ENCODE measurements at regions of chr1 and their contacts with region 1.

Region 1: GRCh38 chr1:203267347-203267846 is 37.9 kb upstream of the BTG2 start:
- DNase-seq: peak; percentile 49 to 89 (median 84)
- ATAC-seq: peak; percentile 80
- H3K4me3 ChIP-seq: peak overlapping the region; percentile 82
- H3K4me3 Mint-ChIP-seq: peak overlapping the region; percentile 76 to 94 (median 90)
- H3K27ac ChIP-seq: peak overlapping the region; percentile 86
- H3K27ac Mint-ChIP-seq: peak overlapping the region in 8 of 9 donors; percentile 80 to 95 (median 92)
- H3K4me1 ChIP-seq: peaks cover 10 to 26% of the 10 kb centered on the region in 2 donors
- H3K4me1 Mint-ChIP-seq: peaks cover 12 to 27% (median 24%) of the 10 kb centered on the region in 7 donors
- H3K27me3 ChIP-seq: no peaks in the 10 kb centered on the region
- H3K27me3 Mint-ChIP-seq: peaks cover 0 to 14% (median 0%) of the 10 kb centered on the region in 5 donors

Region 2: DNA sequence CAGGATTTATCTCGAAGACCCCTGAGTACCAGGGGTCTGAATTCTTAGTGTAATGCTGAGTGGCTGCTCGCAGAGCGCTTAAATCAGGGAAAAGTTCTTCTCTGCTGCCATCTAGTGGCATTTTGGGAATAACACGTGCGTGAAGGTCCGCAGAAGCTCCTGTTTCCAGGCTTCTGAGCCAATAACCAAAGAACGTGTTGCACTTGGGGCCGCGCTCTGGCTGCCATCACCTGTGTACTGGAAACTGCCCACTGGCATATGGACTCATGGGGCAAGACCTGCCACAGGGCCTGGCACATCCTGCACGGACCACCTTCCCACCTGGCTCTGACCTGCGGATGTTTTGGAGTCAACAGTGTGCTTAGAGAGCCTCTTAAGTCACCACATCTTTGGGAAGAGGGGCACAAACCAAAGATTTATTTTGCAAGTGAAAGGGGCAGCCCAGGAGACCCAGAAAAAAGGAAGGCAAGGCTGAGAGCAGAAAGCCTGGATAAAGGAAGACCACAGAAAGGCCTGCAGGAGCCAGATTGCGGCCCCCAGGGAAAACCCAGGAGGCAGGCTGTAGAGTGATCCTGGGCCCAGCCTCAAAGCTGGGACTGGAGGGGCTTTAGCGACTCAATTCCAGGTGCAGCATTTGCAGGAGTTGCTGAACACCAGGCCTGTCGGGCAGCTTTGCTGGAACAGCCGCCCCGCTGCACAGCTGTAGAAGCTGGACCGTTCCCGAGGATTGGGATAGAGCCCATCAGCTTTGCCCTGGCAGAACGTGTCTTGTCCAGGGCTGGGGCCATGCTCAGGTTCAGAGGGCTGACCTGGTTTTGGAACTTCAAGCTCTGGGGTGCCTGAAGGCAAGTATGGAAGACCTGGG is 50.9 kb before region 1 on chr1:
- CTCF ChIA-PET with region 1: interaction called, 5 read pairs
- POLR2A ChIA-PET with region 1: no interaction called
- intact Hi-C with region 1: loop called in 1 of 2 experiments (anchors 1 kb)
- DNase-seq: peak in 8 of 9 donors; percentile 20 to 64 (median 50)
- ATAC-seq: peak; percentile 50
- H3K4me3 ChIP-seq: no peak overlapping the region
- H3K4me3 Mint-ChIP-seq: no peak overlapping the region
- H3K27ac ChIP-seq: no peak overlapping the region
- H3K27ac Mint-ChIP-seq: no peak overlapping the region
- H3K4me1 ChIP-seq: no peaks in the 10 kb centered on the region
- H3K4me1 Mint-ChIP-seq: peaks cover 2 to 8% (median 6%) of the 10 kb centered on the region in 7 donors
- H3K27me3 ChIP-seq: peaks cover 0 to 3% of the 10 kb centered on the region in 2 donors
- H3K27me3 Mint-ChIP-seq: peaks cover 0 to 26% (median 10%) of the 10 kb centered on the region in 5 donors

Region 3: DNA sequence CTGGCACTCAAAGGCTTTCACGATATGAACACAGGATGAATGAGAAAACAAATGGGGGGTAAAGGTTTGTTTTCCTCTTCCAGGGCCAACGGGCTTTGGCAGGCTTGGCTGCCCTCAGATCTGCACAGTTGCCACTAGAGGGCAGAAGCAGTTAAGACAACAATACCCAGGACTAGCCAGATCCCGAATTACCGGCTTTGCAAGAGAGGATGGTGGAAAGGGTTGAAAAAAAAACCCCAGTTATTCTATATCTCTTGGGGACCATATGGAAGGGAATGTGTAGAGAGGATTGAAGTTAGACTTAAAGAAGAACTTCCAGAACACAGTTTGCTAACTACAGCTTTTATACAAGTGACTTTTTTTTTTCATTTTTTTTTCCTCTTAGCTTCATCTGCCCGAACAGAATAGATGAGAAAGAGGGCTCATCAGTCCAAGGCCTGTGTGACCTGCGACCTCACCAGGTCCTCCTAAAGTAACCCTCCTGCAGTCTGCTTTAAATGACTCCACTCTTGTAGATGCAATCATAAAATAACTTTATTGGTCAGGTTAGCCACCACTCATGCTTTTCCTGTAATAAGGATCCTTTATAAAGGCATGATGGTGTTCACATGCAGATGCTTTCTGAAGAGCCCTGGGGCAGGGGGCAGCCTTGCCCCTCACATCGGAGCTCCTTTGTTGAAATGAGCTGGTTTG is 72.9 kb after region 1 on chr1:
- CTCF ChIA-PET with region 1: interaction called, 480 read pairs
- POLR2A ChIA-PET with region 1: interaction called, 21 read pairs
- intact Hi-C with region 1: loop called (anchors 1 kb)
- DNase-seq: peak in 7 of 9 donors; percentile 39 to 68 (median 62)
- ATAC-seq: peak; percentile 80
- H3K4me3 ChIP-seq: no peak overlapping the region
- H3K4me3 Mint-ChIP-seq: no peak overlapping the region
- H3K27ac ChIP-seq: no peak overlapping the region
- H3K27ac Mint-ChIP-seq: peak overlapping the region in 7 of 9 donors; percentile 1 to 75 (median 34)
- H3K4me1 ChIP-seq: peaks cover 9 to 18% of the 10 kb centered on the region in 2 donors
- H3K4me1 Mint-ChIP-seq: peaks cover 24 to 40% (median 34%) of the 10 kb centered on the region in 7 donors
- H3K27me3 ChIP-seq: no peaks in the 10 kb centered on the region
- H3K27me3 Mint-ChIP-seq: peaks cover 0 to 50% (median 6%) of the 10 kb centered on the region in 5 donors

Region 4: DNA sequence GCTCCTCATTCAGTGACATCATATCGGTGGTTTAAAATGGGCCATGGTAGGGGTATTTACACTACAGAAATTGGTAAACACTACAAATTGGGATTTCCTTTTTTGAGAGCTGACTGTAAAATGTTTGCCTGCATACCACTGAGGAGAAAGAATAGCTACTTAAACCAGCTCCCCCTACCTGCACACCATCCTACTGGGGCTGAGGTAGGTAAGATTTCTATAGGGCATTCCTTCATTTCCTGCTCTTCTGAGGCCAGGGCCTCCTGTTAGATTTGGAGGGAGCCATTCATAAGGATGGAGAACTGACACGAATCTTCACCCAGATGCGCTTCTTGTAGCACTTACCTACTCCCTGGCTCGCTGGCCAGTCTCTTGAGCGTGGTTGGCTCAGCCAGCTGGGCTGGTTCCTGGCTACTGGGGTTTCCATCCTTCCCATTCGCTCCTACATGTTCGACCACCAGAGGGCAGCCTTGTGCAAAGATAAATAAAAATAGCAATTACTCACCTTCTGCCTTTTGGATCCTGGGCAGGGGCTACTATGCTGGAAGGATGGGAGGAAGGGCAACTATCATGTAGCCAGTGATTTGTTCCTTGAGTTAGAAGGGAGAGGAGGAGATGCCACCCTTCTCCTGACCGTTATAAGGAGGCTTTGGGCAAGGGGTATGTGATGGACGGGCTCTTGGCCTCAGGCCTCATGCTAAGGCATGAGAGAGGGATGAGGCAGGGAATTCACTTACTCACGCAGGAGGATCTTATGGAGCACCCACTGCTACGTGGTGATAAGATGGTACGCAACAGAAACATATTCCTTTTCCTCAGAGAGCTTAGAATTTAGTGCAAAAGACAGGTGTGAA is 237.2 kb after region 1 on chr1:
- CTCF ChIA-PET with region 1: interaction called, 13 read pairs
- POLR2A ChIA-PET with region 1: no interaction called
- intact Hi-C with region 1: loop called in 1 of 2 experiments (anchors 1 kb)
- DNase-seq: peak; percentile 44 to 76 (median 64)
- ATAC-seq: peak; percentile 69
- H3K4me3 ChIP-seq: no peak overlapping the region
- H3K4me3 Mint-ChIP-seq: no peak overlapping the region
- H3K27ac ChIP-seq: no peak overlapping the region
- H3K27ac Mint-ChIP-seq: peak overlapping the region in 2 of 9 donors; percentile 7 to 38
- H3K4me1 ChIP-seq: no peaks in the 10 kb centered on the region
- H3K4me1 Mint-ChIP-seq: peaks cover 0 to 12% (median 8%) of the 10 kb centered on the region in 7 donors
- H3K27me3 ChIP-seq: no peaks in the 10 kb centered on the region
- H3K27me3 Mint-ChIP-seq: peaks cover 0 to 20% (median 0%) of the 10 kb centered on the region in 5 donors

Region 5: DNA sequence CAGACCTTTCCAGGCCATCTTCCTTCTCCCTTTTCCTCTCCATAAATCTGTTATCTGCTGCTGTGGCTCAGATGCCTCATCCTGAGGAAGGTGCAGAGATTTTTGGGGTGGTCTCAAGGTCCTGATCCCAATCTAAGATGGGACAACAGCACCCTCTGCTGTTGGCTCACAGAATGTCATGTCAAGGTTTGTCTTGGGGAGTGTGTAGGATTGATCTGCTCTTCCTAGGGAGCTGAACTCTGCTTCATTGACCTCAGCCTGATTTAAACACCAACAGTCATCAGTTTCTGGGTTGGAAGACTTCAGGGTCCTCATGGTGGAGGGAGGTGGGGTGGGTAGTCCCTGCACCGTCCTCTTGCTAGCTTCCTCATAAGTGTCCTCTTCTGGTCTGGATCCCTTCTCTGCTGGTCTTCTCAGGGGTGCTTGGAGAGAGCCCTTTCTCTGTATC is 434.8 kb after region 1 on chr1:
- CTCF ChIA-PET with region 1: interaction called, 12 read pairs
- POLR2A ChIA-PET with region 1: interaction called, 6 read pairs
- intact Hi-C with region 1: loop called (anchors 1 to 5 kb)
- DNase-seq: peak; percentile 21 to 73 (median 54)
- ATAC-seq: peak; percentile 77
- H3K4me3 ChIP-seq: no peak overlapping the region
- H3K4me3 Mint-ChIP-seq: no peak overlapping the region
- H3K27ac ChIP-seq: no peak overlapping the region
- H3K27ac Mint-ChIP-seq: peak overlapping the region; percentile 58 to 92 (median 76)
- H3K4me1 ChIP-seq: no peaks in the 10 kb centered on the region
- H3K4me1 Mint-ChIP-seq: peaks cover 3 to 25% (median 12%) of the 10 kb centered on the region in 7 donors
- H3K27me3 ChIP-seq: no peaks in the 10 kb centered on the region
- H3K27me3 Mint-ChIP-seq: no peaks in the 10 kb centered on the region

Region 6: GRCh38 chr1:203871107-203871875 is 603.9 kb after region 1 on chr1:
- CTCF ChIA-PET with region 1: no interaction called
- POLR2A ChIA-PET with region 1: no interaction called
- intact Hi-C with region 1: no loop called
- DNase-seq: peak in 5 of 9 donors; percentile 7 to 18 (median 13)
- ATAC-seq: peak; percentile 79
- H3K4me3 ChIP-seq: no peak overlapping the region
- H3K4me3 Mint-ChIP-seq: no peak overlapping the region
- H3K27ac ChIP-seq: no peak overlapping the region
- H3K27ac Mint-ChIP-seq: peak overlapping the region in 5 of 9 donors; percentile 25 to 63 (median 52)
- H3K4me1 ChIP-seq: no peaks in the 10 kb centered on the region
- H3K4me1 Mint-ChIP-seq: peaks cover 0 to 9% (median 0%) of the 10 kb centered on the region in 7 donors
- H3K27me3 ChIP-seq: no peaks in the 10 kb centered on the region
- H3K27me3 Mint-ChIP-seq: no peaks in the 10 kb centered on the region

Region 7: GRCh38 chr1:204363335-204364124 is 1096.1 kb after region 1 on chr1:
- CTCF ChIA-PET with region 1: no interaction called
- POLR2A ChIA-PET with region 1: no interaction called
- intact Hi-C with region 1: loop called (anchors 1 to 5 kb)
- DNase-seq: peak; percentile 47 to 81 (median 74)
- ATAC-seq: peak; percentile 94
- H3K4me3 ChIP-seq: peak overlapping the region; percentile 69
- H3K4me3 Mint-ChIP-seq: peak overlapping the region; percentile 37 to 84 (median 70)
- H3K27ac ChIP-seq: peak overlapping the region; percentile 58
- H3K27ac Mint-ChIP-seq: peak overlapping the region; percentile 37 to 84 (median 69)
- H3K4me1 ChIP-seq: peaks cover 11 to 12% of the 10 kb centered on the region in 2 donors
- H3K4me1 Mint-ChIP-seq: peaks cover 7 to 18% (median 13%) of the 10 kb centered on the region in 7 donors
- H3K27me3 ChIP-seq: no peaks in the 10 kb centered on the region
- H3K27me3 Mint-ChIP-seq: peaks cover 0 to 8% (median 0%) of the 10 kb centered on the region in 5 donors